Activated naive CD4-positive, alpha-beta T cell treated with anti-CD3 and anti-CD28 coated beads, Interleukin-2, amount 10 ng/mL, durations not matched to agents 7 days and 5 days (primary cell): ENCODE measurements at regions of chr1 and their contacts with region 1.

Region 1: GRCh38 chr1:116737020-116737854 is 17.0 kb upstream of the CD2 start:
- DNase-seq: peak; percentile 83
- H3K4me3 Mint-ChIP-seq: peak overlapping the region; percentile 25
- H3K27ac Mint-ChIP-seq: peak overlapping the region; percentile 96
- H3K4me1 Mint-ChIP-seq: peaks cover 48% of the 10 kb centered on the region
- H3K27me3 Mint-ChIP-seq: no peaks in the 10 kb centered on the region

Region 2: DNA sequence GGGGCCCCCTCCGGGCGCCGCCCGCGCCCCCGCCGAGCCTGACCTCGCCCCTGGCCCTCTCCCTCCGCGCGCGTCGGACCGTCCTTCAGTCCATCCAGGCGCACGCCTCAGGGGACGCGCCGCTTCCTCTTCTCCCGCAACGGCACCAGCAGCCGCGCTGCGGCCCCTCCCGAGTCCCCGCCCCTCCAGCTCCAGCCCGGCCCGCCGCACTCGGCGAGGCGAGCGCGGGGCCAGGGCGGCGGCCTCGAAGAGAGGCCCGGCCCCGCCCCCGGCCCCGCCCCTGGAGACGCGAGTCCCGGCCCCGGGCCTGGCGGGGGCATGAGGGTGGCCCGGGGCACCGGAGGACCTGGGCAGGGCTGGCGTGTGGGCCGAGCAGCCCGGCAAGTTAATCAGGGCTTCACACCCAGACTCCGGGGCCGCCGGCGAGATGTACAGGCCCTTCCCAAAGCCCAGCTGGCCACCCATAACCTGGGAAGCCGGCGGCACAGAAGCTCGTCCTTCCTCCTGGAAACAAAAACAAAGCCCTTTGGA is 69.6 kb before region 1 on chr1 and contains the start of gene IGSF3:
- CTCF ChIA-PET with region 1: no interaction called
- DNase-seq: peak; percentile 67
- H3K4me3 Mint-ChIP-seq: peak within 1 kb of the TSS; percentile 69
- H3K27ac Mint-ChIP-seq: no peak within 1 kb of the TSS
- H3K4me1 Mint-ChIP-seq: peaks cover 16% of the 10 kb centered on the region
- H3K27me3 Mint-ChIP-seq: peaks cover 93% of the 10 kb centered on the region

Region 3: GRCh38 chr1:116748272-116748671 is 11.0 kb after region 1 on chr1:
- CTCF ChIA-PET with region 1: interaction called, 62 read pairs
- DNase-seq: no peak
- H3K4me3 Mint-ChIP-seq: no peak overlapping the region
- H3K27ac Mint-ChIP-seq: no peak overlapping the region
- H3K4me1 Mint-ChIP-seq: peaks cover 29% of the 10 kb centered on the region
- H3K27me3 Mint-ChIP-seq: no peaks in the 10 kb centered on the region

Region 4: GRCh38 chr1:116763787-116764465 is 26.7 kb after region 1 on chr1:
- CTCF ChIA-PET with region 1: interaction called, 67 read pairs
- DNase-seq: peak; percentile 64
- H3K4me3 Mint-ChIP-seq: peak overlapping the region; percentile 71
- H3K27ac Mint-ChIP-seq: peak overlapping the region; percentile 99
- H3K4me1 Mint-ChIP-seq: peaks cover 99% of the 10 kb centered on the region
- H3K27me3 Mint-ChIP-seq: no peaks in the 10 kb centered on the region

Region 5: DNA sequence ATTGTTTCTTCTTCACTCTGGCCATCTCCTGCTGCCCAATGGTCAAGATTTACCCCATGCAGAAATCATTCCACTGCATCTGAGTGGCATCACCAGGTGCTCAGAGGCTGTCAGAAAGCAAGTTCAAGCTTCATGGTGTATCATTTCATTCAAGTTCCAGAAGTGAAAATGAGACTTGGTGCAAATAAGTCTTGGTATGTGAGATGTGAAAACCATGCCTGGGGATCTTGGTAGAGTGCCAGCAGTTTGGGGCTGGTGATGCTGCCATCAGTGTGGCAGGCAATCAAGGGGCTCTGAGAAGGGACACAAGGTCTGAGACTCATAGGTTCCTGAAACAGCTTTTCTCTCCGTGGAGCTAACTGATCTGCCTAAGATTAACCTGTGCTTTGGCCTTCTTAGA is 69.0 kb after region 1 on chr1:
- CTCF ChIA-PET with region 1: interaction called, 12 read pairs
- DNase-seq: peak; percentile 55
- H3K4me3 Mint-ChIP-seq: peak overlapping the region; percentile 45
- H3K27ac Mint-ChIP-seq: peak overlapping the region; percentile 91
- H3K4me1 Mint-ChIP-seq: peaks cover 92% of the 10 kb centered on the region
- H3K27me3 Mint-ChIP-seq: no peaks in the 10 kb centered on the region

Region 6: DNA sequence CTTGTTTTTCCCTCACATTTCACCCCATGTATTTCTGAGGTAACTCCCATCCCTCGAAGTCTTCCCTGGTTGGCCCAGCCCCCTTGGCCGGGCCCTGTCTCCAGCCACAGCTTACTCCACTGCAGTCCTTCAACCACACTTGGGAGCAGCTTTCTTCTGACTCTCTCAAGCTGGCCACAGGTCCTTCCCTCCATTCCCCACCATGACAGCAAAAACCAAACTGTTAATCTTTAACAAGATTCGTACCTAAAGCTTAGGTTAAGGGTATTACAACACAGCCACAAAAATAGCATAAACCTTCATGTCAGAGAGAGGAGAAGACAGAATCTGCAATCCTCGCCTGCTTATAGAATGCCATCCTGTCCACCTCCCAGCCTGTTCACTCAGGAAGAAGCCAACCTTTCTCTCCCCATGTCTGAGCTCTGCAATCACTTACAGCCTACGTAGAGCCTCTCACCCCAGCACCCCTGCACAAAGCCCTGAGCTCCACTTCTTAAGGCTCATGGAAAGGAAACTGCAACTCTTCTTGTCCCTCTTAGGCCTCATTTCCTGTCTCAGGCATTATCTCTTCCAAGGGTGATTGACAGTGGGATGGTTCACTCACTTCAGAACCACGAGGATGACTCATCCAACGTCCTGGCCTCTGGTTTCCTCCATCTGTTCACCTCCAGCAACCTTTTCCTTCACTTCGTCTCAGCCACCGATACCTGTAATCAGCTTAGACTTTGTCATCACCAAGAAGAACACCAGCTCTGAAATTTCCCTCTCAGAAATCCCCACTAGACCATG is 89.8 kb after region 1 on chr1:
- CTCF ChIA-PET with region 1: interaction called, 10 read pairs
- DNase-seq: peak; percentile 70
- H3K4me3 Mint-ChIP-seq: peak overlapping the region; percentile 18
- H3K27ac Mint-ChIP-seq: peak overlapping the region; percentile 94
- H3K4me1 Mint-ChIP-seq: peaks cover 49% of the 10 kb centered on the region
- H3K27me3 Mint-ChIP-seq: no peaks in the 10 kb centered on the region

Region 7: DNA sequence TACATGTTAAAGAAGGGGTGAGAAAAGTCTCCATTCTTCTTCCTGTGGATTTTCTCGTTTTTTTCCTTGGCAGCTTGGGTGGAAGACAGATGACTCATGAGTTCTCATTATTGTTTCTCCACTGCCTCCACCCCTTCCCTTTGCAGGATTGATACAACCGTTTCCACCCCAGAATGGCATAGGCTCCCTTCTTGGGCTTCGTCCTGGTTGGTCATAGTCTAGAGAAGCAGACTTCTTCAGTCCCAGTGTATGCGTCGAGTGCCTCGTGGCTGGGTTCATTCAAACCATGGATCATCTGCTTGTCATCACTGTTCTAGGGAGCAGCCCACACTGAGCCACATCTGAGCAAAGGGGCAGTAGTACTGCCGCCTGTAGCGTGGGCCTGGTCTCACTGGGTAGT is 186.2 kb after region 1 on chr1:
- CTCF ChIA-PET with region 1: no interaction called
- DNase-seq: no peak
- H3K4me3 Mint-ChIP-seq: no peak overlapping the region
- H3K27ac Mint-ChIP-seq: no peak overlapping the region
- H3K4me1 Mint-ChIP-seq: no peaks in the 10 kb centered on the region
- H3K27me3 Mint-ChIP-seq: no peaks in the 10 kb centered on the region

Region 8: GRCh38 chr1:116934586-116935207 is 197.5 kb after region 1 on chr1:
- CTCF ChIA-PET with region 1: interaction called, 12 read pairs
- DNase-seq: no peak
- H3K4me3 Mint-ChIP-seq: no peak overlapping the region
- H3K27ac Mint-ChIP-seq: no peak overlapping the region
- H3K4me1 Mint-ChIP-seq: peaks cover 25% of the 10 kb centered on the region
- H3K27me3 Mint-ChIP-seq: peaks cover 7% of the 10 kb centered on the region